Right ventricle myocardium superior (tissue), 1 donor: ENCODE measurements at regions of chr5 and their contacts with region 1.

Region 1: DNA sequence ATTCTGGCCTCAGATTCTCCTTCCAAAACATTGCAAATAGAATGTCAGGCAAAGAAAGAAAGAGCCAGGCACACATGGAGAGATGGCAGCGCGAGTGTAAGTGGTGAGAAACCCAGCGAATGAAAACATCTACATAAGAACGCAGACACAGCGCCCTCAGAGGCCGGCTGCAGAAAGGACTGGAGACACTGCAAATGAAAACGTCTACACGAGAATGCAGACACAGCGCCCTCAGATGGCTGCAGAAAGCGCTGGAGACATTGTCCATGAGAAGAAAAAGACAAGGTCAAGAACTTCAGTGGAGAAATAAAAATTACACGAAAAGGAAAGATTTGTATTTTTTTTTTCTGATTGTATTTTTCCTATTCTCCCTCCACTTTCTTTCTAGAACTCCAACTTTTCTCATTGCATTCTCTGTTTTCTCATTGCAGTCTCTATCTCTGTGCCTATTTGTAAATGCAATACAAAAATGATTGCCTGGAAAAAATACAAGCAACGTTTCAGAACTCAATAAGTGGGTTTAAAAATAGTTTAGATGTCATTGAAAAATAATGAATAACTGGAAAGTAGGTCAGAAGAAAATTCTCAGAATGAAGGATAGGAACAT is 117.9 kb upstream of the LPCAT1 start:
- DNase-seq: peak; percentile 87
- ATAC-seq: peak; percentile 78

Region 2: DNA sequence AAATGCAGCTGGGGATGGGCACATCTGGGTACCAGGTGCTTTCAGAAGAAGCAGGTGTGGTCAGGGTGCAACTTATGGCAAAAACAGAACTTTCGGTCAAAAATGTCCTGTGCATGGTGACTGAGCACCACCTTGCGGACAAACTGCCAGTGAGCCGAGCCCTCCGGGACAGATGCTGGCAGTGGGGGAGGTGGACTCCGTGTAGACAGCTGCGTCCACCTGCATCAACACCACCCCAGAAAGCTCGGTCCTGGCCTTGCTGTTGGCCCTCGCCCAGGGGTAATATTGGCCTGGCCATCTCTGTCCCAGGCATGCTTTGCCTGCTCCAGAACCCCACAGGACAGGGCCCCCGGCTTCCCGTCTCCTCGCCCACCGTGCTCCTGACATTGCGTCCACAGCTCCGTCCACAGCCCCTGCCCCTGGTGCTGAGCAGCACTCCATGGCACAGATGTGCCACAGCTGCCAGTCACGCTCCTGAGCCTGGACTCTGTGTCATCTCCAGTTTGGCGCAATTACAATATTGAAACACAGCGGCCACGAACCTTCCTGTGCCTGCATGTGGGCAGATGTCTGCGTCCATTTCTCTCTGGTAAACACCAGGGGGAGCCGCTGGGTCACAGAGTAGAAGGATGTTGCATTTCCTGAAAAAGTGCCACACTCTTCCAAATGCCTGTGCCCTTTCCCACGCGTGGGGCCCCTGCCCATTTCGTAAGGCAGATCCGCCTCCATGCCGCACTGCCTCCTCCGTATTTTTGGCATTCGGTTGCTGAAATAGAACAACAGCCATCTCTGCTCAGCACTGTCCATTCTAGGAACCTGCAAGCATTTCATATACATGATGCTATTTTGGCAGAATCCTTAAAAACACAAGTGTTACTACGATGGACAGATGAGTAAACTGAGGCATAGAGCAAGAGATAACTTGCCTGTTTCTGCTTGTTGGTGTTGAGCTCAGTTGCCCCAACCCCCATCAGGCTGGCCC is 473.6 kb before region 1 on chr5:
- intact Hi-C with region 1: loop called (anchors 5 kb)
- DNase-seq: peak; percentile 73
- ATAC-seq: peak; percentile 85

Region 3: GRCh38 chr5:1385395-1386273 is 256.0 kb before region 1 on chr5:
- intact Hi-C with region 1: loop called (anchors 10 kb)
- DNase-seq: peak; percentile 94
- ATAC-seq: peak; percentile 95

Region 4: DNA sequence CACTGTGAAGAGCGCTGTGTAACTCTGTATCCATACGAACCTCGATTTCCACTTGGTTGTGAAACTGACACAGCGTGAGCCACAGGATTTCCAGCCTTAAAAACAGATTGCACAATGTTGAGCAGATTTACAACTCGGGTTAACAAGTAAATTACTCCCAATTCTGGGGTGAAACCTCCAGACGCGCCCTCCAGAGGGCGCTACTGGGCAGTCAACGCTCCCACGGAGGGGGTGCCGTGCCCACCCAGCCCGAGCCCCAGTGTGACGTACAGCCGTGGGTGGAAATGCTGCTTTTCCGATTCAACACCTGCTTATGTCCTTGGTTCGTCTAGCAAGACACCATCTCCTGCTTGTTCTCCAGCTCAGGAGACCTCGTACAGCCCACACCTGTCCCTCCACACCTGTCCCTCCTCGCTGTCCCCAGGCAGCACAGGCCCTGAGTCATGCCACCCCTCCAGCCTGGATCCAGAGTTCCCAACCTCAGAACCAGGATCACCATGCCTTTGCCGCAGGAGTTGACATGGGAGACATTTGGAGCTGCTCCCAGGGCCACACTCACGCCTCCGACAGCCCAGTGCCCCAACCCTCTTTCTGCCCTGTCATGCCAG is 162.0 kb before region 1 on chr5:
- intact Hi-C with region 1: loop called (anchors 10 kb)
- DNase-seq: peak; percentile 62
- ATAC-seq: peak; percentile 57